ENCODE measurements at regions of chr2 and their contacts with region 1.

Region 1: GRCh38 chr2:147910990-147911473 is 66.2 kb downstream of the ACVR2A start:
- DNase-seq: peak; percentile 52
- ATAC-seq: no peak
- H3K4me3 ChIP-seq: no peak overlapping the region
- H3K27ac ChIP-seq: no peak overlapping the region
- H3K4me1 ChIP-seq: no peaks in the 10 kb centered on the region
- H3K27me3 ChIP-seq: no peaks in the 10 kb centered on the region
- CTCF ChIP-seq: peak; percentile 47 to 72 (median 64); a peak in 5 of 6 replicates
- POLR2A ChIP-seq: no peak
- RAD21 ChIP-seq: peak; percentile 87

Region 2: GRCh38 chr2:146734042-146734820 is 1176.8 kb before region 1 on chr2:
- CTCF ChIA-PET with region 1: interaction called, 25 read pairs
- POLR2A ChIA-PET with region 1: no interaction called
- RAD21 ChIA-PET with region 1: interaction called, 3 read pairs
- intact Hi-C with region 1: loop called (anchors 1 kb)
- DNase-seq: peak; percentile 60
- ATAC-seq: peak; percentile 99
- H3K4me3 ChIP-seq: no peak overlapping the region
- H3K27ac ChIP-seq: no peak overlapping the region
- H3K4me1 ChIP-seq: no peaks in the 10 kb centered on the region
- H3K27me3 ChIP-seq: no peaks in the 10 kb centered on the region
- CTCF ChIP-seq: peak; percentile 44 to 75 (median 61); a peak in 4 of 6 replicates
- POLR2A ChIP-seq: no peak
- RAD21 ChIP-seq: peak; percentile 81

Region 3: GRCh38 chr2:146927080-146927711 is 983.8 kb before region 1 on chr2:
- CTCF ChIA-PET with region 1: interaction called, 16 read pairs
- POLR2A ChIA-PET with region 1: no interaction called
- RAD21 ChIA-PET with region 1: interaction called in 1 of 2 experiments, 4 read pairs
- intact Hi-C with region 1: loop called (anchors 1 kb)
- DNase-seq: peak; percentile 39
- ATAC-seq: peak; percentile 92
- H3K4me3 ChIP-seq: no peak overlapping the region
- H3K27ac ChIP-seq: no peak overlapping the region
- H3K4me1 ChIP-seq: 0 out of 4 replicates have a peak, but pooled peaks cover 0 to 2% of the 10 kb centered on the region in 2 experiments
- H3K27me3 ChIP-seq: no peaks in the 10 kb centered on the region
- CTCF ChIP-seq: peak; percentile 33 to 64 (median 63); a peak in 5 of 6 replicates
- POLR2A ChIP-seq: no peak
- RAD21 ChIP-seq: peak; percentile 80

Region 4: DNA sequence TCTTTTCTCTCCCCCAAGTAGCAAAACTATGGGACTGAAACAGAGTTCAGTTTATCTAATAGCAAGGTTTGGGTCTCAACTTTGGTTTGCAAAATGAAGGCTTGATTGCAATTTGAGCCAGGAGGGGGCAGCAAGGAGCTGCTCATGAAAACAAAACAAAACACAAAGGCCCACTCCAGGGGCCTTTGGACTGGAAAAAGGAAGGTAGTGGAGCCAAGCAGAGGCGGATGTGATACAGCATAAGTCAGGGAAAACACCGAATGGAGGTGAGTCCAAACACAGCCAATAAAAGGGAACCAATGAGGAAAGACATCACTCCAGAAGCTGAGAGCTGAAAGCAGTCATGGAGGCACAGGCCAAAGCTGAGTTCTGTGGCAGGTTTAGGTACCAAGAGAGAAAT is 865.9 kb before region 1 on chr2:
- CTCF ChIA-PET with region 1: interaction called, 23 read pairs
- POLR2A ChIA-PET with region 1: no interaction called
- RAD21 ChIA-PET with region 1: interaction called in 1 of 2 experiments, 3 read pairs
- intact Hi-C with region 1: loop called (anchors 1 kb)
- DNase-seq: peak; percentile 26
- ATAC-seq: peak; percentile 83
- H3K4me3 ChIP-seq: no peak overlapping the region
- H3K27ac ChIP-seq: no peak overlapping the region
- H3K4me1 ChIP-seq: no peaks in the 10 kb centered on the region
- H3K27me3 ChIP-seq: no peaks in the 10 kb centered on the region
- CTCF ChIP-seq: peak; percentile 56 to 79 (median 72); a peak in 5 of 6 replicates
- POLR2A ChIP-seq: no peak
- RAD21 ChIP-seq: peak; percentile 68

Region 5: GRCh38 chr2:147082850-147083522 is 828.0 kb before region 1 on chr2:
- CTCF ChIA-PET with region 1: interaction called, 14 read pairs
- POLR2A ChIA-PET with region 1: no interaction called
- RAD21 ChIA-PET with region 1: no interaction called
- intact Hi-C with region 1: loop called (anchors 1 kb)
- DNase-seq: peak; percentile 72
- ATAC-seq: peak; percentile 79
- H3K4me3 ChIP-seq: no peak overlapping the region
- H3K27ac ChIP-seq: no peak overlapping the region
- H3K4me1 ChIP-seq: no peaks in the 10 kb centered on the region
- H3K27me3 ChIP-seq: no peaks in the 10 kb centered on the region
- CTCF ChIP-seq: peak; percentile 48 to 95 (median 84); a peak in 5 of 6 replicates
- POLR2A ChIP-seq: no peak
- RAD21 ChIP-seq: peak; percentile 70